ENCODE measurements at regions of chr13 and their contacts with region 1.

Region 1: GRCh38 chr13:44435142-44435982 is 61.7 kb downstream of the SERP2 start:
- DNase-seq: peak; percentile 93
- H3K4me3 ChIP-seq: peak overlapping the region; percentile 87
- H3K27ac ChIP-seq: peak overlapping the region; percentile 95
- H3K4me1 ChIP-seq: peaks cover 63% of the 10 kb centered on the region
- H3K27me3 ChIP-seq: no peaks in the 10 kb centered on the region
- CTCF ChIP-seq: no peak

Region 2: DNA sequence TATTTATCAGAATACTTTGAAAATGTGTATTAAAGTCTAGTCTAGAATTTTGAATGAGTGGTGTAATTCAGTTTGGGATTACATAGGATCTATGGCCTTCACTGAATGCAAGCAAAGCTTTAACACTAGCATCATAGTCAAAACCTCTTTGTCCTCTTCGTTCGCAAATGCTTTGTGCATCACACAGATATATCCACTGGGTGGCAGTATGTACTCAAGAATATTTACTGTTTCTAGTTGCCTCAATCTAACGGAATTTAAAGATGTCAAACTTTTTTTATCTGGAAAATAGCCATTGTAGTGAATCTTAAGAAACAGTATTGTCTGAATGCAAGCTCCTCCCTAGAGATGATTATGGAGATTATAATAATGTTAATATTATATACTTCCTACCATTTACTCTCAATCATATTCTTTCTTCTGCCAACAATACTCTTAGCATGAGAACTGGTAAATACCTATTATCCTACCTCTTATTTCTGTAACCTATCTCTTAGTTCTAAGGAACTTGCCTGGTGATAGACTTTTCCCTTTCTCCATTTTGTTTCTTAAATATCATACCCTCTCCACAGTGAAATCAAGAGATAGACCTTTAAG is 529.8 kb before region 1 on chr13:
- intact Hi-C with region 1: loop called (anchors 2 kb)
- DNase-seq: no peak
- H3K4me3 ChIP-seq: no peak overlapping the region
- H3K27ac ChIP-seq: no peak overlapping the region
- H3K4me1 ChIP-seq: peaks cover 18% of the 10 kb centered on the region
- H3K27me3 ChIP-seq: no peaks in the 10 kb centered on the region
- CTCF ChIP-seq: peak; percentile 86

Region 3: GRCh38 chr13:44050450-44051063 is 384.8 kb before region 1 on chr13:
- intact Hi-C with region 1: loop called (anchors 5 kb)
- DNase-seq: no peak
- H3K4me3 ChIP-seq: no peak overlapping the region
- H3K27ac ChIP-seq: no peak overlapping the region
- H3K4me1 ChIP-seq: peaks cover 8% of the 10 kb centered on the region
- H3K27me3 ChIP-seq: no peaks in the 10 kb centered on the region
- CTCF ChIP-seq: peak; percentile 89

Region 4: DNA sequence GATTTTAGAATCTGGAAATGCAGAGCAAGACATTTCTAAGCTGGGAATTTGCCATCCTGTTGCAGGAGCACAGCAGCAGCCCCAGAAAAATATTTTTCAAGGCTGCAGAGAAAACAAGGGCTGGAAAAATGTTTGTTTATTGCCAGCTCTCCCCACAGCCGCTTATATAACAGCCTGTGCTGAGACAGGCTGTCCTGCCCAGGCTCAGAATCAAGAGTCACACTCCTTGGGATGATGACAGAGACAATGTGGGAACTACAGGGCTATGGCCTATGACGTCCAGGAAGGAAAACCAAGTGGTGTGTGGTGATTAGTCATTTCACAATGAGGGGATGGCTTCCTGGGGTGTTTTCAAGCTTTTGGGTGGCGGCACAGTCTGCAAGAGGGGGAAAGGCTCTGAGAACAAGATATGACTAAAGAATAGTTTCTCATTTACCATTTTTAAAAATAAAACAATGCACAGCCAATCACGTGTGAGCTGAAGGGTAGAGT is 198.0 kb before region 1 on chr13:
- intact Hi-C with region 1: loop called (anchors 5 kb)
- DNase-seq: peak; percentile 46
- H3K4me3 ChIP-seq: no peak overlapping the region
- H3K27ac ChIP-seq: peak overlapping the region; percentile 89
- H3K4me1 ChIP-seq: peaks cover 39% of the 10 kb centered on the region
- H3K27me3 ChIP-seq: no peaks in the 10 kb centered on the region
- CTCF ChIP-seq: no peak

Region 5: DNA sequence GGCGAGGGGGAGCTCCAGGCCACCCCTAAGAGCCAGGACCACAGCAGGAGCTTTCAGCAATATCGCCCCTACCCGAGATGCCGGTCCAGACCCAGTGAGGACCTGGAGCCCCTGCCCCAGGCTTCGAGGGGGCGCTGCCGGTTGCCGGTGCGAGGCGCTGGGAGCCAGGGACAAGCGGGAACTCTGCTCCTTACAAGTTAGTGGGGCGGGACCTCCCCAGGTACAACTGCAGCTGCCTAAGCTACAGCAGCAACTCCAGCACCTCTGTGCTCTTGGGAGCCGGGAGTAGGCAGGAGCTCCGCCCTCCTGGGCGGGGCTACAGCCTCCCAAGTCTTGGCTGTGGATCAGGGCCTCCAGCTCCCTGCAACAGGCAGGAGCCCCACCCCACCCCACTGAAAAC is 156.0 kb after region 1 on chr13:
- intact Hi-C with region 1: no loop called
- DNase-seq: no peak
- H3K4me3 ChIP-seq: no peak overlapping the region
- H3K27ac ChIP-seq: no peak overlapping the region
- H3K4me1 ChIP-seq: no peaks in the 10 kb centered on the region
- H3K27me3 ChIP-seq: no peaks in the 10 kb centered on the region
- CTCF ChIP-seq: no peak

Measured in left ventricle myocardium inferior (tissue), 1 donor.